ENCODE measurements at regions of chr14 and their contacts with region 1.

Region 1: DNA sequence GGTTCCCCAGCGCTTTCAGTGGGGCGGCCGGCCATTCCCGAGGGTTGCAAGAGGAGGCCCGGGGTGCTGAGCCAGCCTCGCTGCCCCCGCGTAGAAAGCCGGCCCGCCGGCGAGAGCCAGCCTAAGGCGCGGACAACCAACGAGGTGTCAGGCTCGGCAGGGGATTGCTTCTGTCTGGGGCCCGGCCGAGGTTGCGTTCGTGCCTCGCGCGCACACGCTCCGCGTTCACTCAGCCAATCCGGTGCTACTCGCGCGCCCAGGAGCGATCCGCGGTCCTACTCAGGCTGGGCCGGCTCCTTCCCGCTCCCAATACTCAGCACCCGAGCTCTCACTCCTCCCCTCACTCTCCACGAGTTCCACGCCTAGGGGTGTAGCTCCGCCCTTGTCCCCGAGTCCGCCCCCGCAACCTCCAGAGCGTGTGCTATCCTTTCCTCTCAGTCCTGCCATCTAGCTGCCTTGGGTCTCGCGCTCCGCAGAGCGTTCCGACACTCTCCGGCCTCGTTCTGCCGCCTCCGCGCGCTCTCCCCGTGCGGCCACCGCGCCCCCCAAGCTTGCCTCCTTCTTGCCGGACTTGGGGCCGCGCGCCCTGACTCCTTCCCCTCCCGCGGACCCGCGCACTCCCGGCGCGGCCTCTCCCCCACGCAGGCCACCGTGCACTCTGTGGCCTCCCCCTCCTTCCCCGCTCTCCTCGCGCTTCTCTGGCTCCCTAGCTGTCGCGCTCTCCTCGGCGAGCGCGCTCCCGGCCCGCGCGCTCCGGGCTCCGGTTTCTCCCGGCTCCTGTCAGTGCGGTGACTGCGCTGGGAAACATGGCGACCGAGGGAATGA is at the start of gene GPHN:
- DNase-seq: peak; percentile 88 to 98
- H3K4me3 ChIP-seq: peak within 1 kb of the TSS; percentile 82 to 84
- H3K27ac ChIP-seq: peak within 1 kb of the TSS; percentile 85 to 92
- H3K4me1 ChIP-seq: peaks cover 0 to 2% of the 10 kb centered on the region in 2 donors
- H3K27me3 ChIP-seq: no peaks in the 10 kb centered on the region
- CTCF ChIP-seq: peak in 2 of 3 experiments; percentile 19 to 43
- total RNA-seq, gene GPHN: 3.3 TPM

Region 2: DNA sequence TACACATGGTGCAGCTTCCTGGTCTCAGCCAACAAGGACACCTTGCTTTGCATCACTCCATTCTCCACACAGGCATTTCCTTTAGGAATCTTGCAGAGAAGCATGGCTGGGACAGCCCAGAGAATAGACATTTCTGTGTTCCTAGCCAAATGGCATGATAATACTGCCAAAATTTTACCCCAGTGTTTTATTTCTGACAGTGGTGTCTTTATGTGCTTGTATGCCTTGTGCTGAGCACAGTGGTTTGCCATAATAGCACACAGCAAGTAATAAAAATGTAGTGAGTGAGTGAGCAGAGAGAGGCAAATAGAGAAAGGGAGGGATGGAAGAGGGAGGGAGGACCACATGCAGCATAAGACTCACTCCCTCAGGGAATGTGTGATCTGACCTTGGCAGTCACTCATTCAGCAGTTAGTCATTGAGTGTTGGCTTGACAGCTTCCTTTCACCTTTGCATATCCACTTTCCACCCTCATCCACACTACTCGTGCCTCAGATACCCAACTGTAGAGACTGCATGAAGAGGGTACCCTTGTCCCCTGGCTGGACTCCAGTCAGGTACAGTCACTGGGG is 234.6 kb before region 1 on chr14:
- intact Hi-C with region 1: no loop called
- DNase-seq: no peak
- H3K4me3 ChIP-seq: no peak overlapping the region
- H3K27ac ChIP-seq: no peak overlapping the region
- H3K4me1 ChIP-seq: no peaks in the 10 kb centered on the region
- H3K27me3 ChIP-seq: no peaks in the 10 kb centered on the region
- CTCF ChIP-seq: no peak

Region 3: DNA sequence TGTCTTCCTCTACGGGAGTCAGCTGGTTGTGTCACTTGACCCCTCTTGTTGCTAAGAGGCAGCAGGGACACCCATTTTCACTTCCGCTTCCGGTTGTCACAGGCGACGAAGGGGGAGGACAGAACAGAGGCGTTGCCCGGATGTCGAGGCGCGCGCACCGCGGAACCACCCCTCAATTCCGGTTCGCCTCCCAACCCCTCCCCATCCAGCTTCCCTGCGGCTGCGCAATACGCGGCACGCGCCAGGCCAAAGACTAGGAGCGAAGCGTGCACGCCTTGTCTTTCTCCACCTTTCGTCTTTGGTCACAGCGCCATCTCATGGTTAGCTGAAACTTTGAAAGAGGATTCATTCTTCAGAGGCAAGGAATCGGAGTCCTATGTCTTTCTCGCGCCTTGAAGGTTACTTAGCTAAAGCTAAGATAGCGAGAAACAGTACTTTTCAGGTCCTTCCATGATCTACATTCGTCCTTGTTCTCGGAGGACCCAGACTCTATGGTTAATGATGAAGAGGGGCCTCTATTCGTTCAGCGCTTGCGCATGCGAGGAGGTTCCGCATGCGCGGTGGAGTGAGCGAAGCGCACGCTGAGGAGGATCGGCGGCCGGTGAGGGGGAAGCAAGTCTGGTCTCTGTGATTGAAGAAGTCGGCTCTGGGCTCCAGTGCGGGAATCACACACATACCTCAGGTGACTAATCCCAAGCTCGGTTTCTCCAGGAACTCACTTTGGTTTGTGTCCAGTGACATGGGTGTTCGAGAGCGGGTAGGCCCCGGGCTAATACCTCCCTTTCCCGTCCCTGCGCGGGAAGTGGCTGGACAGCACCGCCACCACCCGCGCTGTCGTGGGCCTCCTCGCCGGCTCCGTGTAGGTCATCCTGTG is 852.1 kb after region 1 on chr14 and contains the starts of genes ATP6V1D and EIF2S1:
- intact Hi-C with region 1: loop called (anchors 5 kb)
- DNase-seq: peak; percentile 97 to 99
- H3K4me3 ChIP-seq: peak within 1 kb of the TSS; percentile 77 to 85
- H3K27ac ChIP-seq: peak within 1 kb of the TSS; percentile 87 to 95
- H3K4me1 ChIP-seq: peaks cover 6 to 35% of the 10 kb centered on the region in 2 donors
- H3K27me3 ChIP-seq: no peaks in the 10 kb centered on the region
- CTCF ChIP-seq: peak; percentile 97 to 99 (median 98)
- total RNA-seq, gene ATP6V1D: 27.6 TPM
- total RNA-seq, gene EIF2S1: 55.1 TPM